Activated CD8-positive, alpha-beta T cell treated with anti-CD3 and anti-CD28 coated beads, Interleukin-2, amount 10 ng/mL, durations not matched to agents 7 days and 5 days (primary cell): ENCODE measurements at regions of chr15 and their contacts with region 1.

Region 1: DNA sequence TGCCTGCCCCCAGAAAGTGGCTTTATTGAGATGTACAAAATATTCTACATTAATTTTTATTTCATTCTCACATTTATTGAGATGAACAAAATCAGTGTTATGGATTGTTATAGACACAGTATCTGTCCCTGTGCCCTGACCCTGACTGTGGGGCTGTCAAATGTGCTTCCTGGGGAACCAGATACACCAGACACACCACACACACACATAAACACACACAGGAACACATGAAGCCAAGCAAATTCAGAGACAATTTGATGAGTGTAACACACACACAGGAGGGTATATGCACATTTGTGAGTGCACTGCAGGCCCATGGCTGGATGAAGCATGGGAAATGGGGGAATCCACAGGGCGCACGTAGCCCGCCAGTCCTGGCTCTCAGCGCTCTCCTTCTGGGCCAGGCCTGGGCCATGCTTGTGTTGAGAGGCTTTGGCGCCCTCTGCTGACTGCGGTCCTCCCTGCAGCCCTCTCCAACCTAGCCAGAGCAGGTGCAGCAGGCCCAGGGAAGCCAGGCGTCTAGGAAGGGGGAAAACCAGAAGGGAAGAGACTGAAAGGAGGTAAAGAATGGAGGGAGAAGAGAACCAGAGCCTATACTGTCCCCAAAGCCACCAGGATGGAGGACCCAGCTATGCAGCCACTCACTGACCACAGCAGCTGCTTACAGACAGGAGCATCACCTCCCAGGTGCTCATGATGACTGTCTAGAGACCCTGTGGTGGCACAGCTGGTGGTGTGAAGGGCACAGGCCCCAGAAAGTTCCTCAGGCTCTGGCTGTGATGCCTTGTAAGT is 18.0 kb upstream of the LOXL1 start:
- DNase-seq: peak; percentile 87
- ATAC-seq: peak; percentile 99
- H3K4me3 Mint-ChIP-seq: no peak overlapping the region
- H3K27ac Mint-ChIP-seq: peak overlapping the region; percentile 37
- H3K4me1 Mint-ChIP-seq: peaks cover 27% of the 10 kb centered on the region
- H3K27me3 Mint-ChIP-seq: no peaks in the 10 kb centered on the region

Region 2: GRCh38 chr15:73897441-73898261 is 10.6 kb before region 1 on chr15:
- CTCF ChIA-PET with region 1: interaction called, 47 read pairs
- POLR2A ChIA-PET with region 1: interaction called, 5 read pairs
- DNase-seq: peak; percentile 84
- ATAC-seq: peak; percentile 92
- H3K4me3 Mint-ChIP-seq: no peak overlapping the region
- H3K27ac Mint-ChIP-seq: no peak overlapping the region
- H3K4me1 Mint-ChIP-seq: peaks cover 9% of the 10 kb centered on the region
- H3K27me3 Mint-ChIP-seq: peaks cover 7% of the 10 kb centered on the region

Region 3: DNA sequence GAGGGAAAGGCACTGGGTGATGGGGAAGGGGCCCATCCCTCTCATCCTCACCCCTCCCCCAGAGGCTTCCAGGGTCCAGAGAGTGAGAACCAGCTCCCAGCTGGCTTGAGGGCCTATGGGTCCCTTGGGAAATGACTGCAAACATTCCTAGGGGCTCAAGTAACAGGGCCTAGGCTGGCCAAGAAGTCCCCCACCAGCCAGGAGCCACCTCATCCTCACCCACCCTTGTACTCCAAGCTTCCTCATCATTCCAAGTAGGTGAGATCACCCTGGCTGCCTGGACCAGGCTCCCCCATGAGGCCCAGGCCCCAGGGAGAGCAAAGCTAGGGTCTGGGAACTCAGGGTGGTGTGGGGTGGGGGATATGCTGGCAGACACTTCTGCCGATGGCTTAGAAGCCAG is 32.8 kb after region 1 on chr15:
- CTCF ChIA-PET with region 1: no interaction called
- POLR2A ChIA-PET with region 1: no interaction called
- DNase-seq: no peak
- ATAC-seq: no peak
- H3K4me3 Mint-ChIP-seq: no peak overlapping the region
- H3K27ac Mint-ChIP-seq: no peak overlapping the region
- H3K4me1 Mint-ChIP-seq: peaks cover 22% of the 10 kb centered on the region
- H3K27me3 Mint-ChIP-seq: no peaks in the 10 kb centered on the region

Region 4: DNA sequence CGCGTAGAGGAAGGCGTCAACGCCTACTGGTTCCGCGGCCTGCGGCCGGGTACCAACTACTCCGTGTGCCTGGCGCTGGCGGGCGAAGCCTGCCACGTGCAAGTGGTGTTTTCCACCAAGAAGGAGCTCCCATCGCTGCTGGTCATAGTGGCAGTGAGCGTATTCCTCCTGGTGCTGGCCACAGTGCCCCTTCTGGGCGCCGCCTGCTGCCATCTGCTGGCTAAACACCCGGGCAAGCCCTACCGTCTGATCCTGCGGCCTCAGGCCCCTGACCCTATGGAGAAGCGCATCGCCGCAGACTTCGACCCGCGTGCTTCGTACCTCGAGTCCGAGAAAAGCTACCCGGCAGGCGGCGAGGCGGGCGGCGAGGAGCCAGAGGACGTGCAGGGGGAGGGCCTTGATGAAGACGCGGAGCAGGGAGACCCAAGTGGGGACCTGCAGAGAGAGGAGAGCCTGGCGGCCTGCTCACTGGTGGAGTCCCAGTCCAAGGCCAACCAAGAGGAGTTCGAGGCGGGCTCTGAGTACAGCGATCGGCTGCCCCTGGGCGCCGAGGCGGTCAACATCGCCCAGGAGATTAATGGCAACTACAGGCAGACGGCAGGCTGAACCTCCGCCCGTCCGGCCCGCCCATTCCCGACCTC is 226.3 kb after region 1 on chr15:
- CTCF ChIA-PET with region 1: no interaction called
- POLR2A ChIA-PET with region 1: no interaction called
- DNase-seq: no peak
- ATAC-seq: no peak
- H3K4me3 Mint-ChIP-seq: no peak overlapping the region
- H3K27ac Mint-ChIP-seq: peak overlapping the region; percentile 70
- H3K4me1 Mint-ChIP-seq: peaks cover 22% of the 10 kb centered on the region
- H3K27me3 Mint-ChIP-seq: peaks cover 82% of the 10 kb centered on the region